Calu3 (cell line): ENCODE measurements at regions of chr15 and their contacts with region 1.

Region 1: DNA sequence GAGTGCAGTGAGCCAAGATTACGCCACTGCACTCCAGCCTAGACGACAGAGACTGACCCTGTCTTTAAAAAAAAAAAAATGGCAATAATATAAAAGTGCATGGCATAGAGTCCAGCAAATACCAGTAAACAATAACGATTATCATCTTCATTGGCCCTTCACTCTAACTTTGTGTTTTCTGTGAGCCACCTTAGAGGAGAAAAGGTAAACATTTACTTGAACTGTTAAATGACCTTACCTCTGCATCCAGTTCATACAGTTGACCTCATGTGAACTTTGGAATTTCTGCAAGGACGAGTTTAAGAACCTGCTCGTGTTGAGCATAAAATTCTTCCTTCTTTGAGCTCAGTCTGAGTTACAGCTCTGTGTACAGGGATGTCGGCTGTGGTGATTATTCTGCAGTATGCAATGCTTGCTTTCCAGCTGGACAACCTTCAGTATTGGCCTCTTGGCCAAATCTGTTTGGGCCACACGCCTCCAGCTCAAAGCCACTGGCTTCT is 56.6 kb downstream of the RLBP1 start:
- DNase-seq: no peak
- H3K4me3 Mint-ChIP-seq: no peak overlapping the region
- H3K27ac Mint-ChIP-seq: no peak overlapping the region
- H3K4me1 Mint-ChIP-seq: peaks cover 65% of the 10 kb centered on the region
- H3K27me3 Mint-ChIP-seq: no peaks in the 10 kb centered on the region
- CTCF ChIP-seq: no peak

Region 2: DNA sequence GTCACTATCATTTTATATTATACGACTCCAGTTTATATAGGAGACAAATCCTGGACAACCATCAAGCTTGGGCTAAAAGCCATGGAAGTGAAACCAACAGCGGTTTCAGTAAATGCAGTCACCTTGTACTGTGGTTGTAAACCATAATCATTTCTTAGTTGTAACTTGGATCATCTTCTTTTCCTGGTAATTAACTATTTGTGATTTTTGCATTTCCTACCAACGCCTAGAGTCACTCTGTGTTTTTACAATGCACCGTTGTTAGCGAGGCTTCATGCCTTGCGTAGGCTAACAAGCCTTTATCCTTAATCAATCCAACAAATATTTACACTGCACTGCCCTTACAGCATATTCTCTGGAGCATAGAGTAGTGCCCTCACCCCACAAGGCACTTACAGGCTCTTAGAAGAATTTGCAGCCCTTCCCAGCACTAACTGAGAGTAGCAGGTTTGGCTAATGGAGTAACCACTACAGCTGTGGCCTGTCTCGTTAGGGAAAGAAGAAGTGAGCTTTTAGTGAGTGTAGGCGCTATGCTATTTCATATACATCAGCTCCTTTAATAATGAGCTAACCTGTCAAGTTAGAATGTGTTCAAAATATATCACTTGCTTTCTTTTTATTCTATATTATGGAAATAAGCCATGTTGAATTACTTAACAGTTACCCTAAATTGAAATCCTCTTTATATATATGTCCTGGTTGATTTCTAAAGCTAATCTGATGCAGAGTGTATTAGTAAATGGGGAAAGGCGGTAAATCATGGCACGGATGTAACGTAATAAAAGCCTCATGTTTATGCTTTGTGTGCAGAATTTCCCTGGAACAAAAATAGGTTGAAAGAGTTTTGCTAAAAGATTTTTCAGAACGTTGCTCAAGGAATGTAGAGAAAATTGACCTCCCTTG is 13.7 kb before region 1 on chr15:
- CTCF ChIA-PET with region 1: interaction called, 5 read pairs
- intact Hi-C with region 1: loop called (anchors 2 kb)
- DNase-seq: peak; percentile 52
- H3K4me3 Mint-ChIP-seq: peak overlapping the region; percentile 47
- H3K27ac Mint-ChIP-seq: peak overlapping the region; percentile 75
- H3K4me1 Mint-ChIP-seq: peaks cover 30% of the 10 kb centered on the region
- H3K27me3 Mint-ChIP-seq: no peaks in the 10 kb centered on the region
- CTCF ChIP-seq: no peak